Aorta (tissue), 5 donors: ENCODE measurements at regions of chr7 and their contacts with region 1.

Region 1: DNA sequence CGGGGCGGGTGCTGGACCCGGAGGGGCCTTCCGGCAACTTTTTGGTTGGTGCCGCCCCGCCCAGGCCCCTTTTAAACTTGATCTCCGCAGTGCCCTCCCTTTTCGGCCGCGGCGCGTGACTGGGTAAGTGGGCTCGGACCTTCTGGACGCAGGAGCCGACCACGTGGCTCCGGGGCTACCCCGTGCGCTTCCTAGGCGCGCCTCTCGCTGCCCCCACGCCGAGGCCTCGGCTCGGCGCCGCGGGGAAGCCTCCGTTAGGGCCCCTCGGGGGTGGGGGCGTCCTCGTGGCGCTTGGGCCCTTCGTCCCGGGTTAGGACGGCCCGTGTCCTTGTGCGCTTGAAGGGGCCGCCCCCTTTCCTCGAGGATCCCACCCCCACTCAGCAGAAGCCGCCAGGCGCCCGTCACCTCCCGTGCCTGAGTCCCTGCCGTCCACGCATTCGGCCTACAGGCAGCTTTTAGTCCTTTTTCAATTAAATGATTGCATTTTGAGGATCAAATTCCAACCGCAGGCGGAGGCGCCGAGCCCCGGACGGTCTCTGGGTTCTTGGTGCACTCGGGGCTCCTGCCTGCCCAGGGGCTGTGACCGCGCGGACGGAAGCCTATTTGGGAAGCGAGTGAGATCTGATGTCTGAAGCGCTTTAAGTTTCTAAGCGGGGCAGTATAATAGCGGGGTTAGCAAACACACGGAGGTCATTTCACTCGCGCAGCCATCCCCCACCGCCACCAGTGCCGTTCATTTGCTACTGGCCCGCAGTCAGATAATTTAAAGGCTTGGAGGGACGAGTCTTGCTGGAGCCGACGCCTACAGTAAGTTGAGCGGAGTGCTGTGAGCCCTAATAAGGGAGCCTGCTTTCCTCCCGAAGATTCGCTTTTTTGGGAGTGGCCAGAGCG is 31.8 kb upstream of the TOMM7 start:
- DNase-seq: peak; percentile 95 to 96
- ATAC-seq: peak; percentile 92
- H3K4me3 ChIP-seq: peak overlapping the region; percentile 61 to 66
- H3K27ac ChIP-seq: peak overlapping the region; percentile 15 to 66
- H3K4me1 ChIP-seq: peaks cover 0 to 3% of the 10 kb centered on the region in 2 donors
- H3K27me3 ChIP-seq: no peaks in the 10 kb centered on the region

Region 2: DNA sequence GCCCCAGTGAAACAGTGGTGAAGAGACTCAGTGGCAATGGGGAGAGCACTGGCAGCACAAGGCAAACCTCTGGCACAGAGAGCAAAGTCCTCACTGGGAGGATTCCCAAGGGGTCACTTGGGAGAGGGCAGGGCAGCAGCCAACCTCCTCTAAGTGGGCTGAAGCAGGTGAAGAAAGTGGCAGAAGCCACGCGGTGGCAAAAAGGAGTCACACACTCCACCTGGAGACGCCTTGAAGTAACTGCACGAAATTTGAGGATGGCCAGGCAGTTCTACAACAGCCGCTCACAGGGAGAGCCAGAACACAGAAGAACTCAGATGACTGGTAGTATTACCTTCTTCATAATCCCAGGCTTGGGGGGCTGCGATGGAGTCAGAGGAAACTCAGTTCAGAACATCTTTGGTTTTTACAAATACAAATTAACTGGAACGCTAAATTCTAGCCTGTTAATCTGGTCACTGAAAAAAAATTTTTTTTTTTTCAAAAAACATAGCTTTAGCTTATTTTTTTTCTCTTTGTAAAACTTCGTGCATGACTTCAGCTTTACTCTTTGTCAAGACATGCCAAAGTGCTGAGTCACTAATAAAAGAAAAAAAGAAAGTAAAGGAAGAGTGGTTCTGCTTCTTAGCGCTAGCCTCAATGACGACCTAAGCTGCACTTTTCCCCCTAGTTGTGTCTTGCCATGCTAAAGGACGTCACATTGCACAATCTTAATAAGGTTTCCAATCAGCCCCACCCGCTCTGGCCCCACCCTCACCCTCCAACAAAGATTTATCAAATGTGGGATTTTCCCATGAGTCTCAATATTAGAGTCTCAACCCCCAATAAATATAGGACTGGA is 127.8 kb before region 1 on chr7:
- intact Hi-C with region 1: loop called in 1 of 2 experiments (anchors 5 kb)
- DNase-seq: peak in 1 of 2 donors; percentile 61
- ATAC-seq: peak; percentile 80
- H3K4me3 ChIP-seq: peak overlapping the region in 1 of 2 donors; percentile 15
- H3K27ac ChIP-seq: peak overlapping the region in 1 of 2 donors; percentile 0
- H3K4me1 ChIP-seq: no peaks in the 10 kb centered on the region
- H3K27me3 ChIP-seq: no peaks in the 10 kb centered on the region

Region 3: DNA sequence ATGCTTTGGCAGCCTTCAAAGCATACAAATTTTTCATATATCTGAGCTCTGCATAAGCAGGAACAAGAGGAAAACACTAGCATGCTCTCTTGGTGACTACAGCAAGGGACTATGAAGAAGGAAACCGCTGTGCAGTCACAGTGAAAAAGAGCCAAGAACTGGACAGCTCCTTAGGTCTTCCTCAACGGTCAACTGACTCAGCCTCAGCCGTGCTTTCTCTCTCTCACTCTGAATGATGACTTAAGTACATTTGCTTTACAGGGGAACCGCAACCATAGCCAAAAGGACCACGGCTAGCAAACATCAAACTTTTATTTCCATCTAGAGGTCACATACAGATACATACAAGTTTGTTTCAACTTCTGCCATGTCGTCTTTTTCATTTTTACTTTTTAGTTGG is 89.6 kb after region 1 on chr7:
- intact Hi-C with region 1: loop called in 1 of 2 experiments (anchors 10 kb)
- DNase-seq: peak in 1 of 2 donors; percentile 52
- ATAC-seq: peak; percentile 71
- H3K4me3 ChIP-seq: no peak overlapping the region
- H3K27ac ChIP-seq: no peak overlapping the region
- H3K4me1 ChIP-seq: peaks cover 0 to 3% of the 10 kb centered on the region in 2 donors
- H3K27me3 ChIP-seq: no peaks in the 10 kb centered on the region

Region 4: GRCh38 chr7:23013715-23014649 is 159.6 kb after region 1 on chr7 and contains the start of gene HYCC1:
- intact Hi-C with region 1: loop called (anchors 2 to 10 kb)
- DNase-seq: peak; percentile 99
- ATAC-seq: peak; percentile 99
- H3K4me3 ChIP-seq: peak within 1 kb of the TSS; percentile 96 to 99
- H3K27ac ChIP-seq: peak within 1 kb of the TSS; percentile 11 to 68
- H3K4me1 ChIP-seq: peaks cover 8 to 21% of the 10 kb centered on the region in 2 donors
- H3K27me3 ChIP-seq: no peaks in the 10 kb centered on the region
- total RNA-seq, gene HYCC1: 61.1 to 69.3 TPM

Region 5: GRCh38 chr7:23093546-23093945 is 239.1 kb after region 1 on chr7:
- intact Hi-C with region 1: no loop called
- DNase-seq: no peak
- ATAC-seq: no peak
- H3K4me3 ChIP-seq: no peak overlapping the region
- H3K27ac ChIP-seq: no peak overlapping the region
- H3K4me1 ChIP-seq: no peaks in the 10 kb centered on the region
- H3K27me3 ChIP-seq: no peaks in the 10 kb centered on the region